ENCODE measurements at regions of chr6 and their contacts with region 1.

Region 1: GRCh38 chr6:154156135-154156896 is 117.3 kb downstream of the OPRM1 start:
- DNase-seq: no peak
- ATAC-seq: no peak
- H3K4me3 ChIP-seq: no peak overlapping the region
- H3K27ac ChIP-seq: no peak overlapping the region
- H3K4me1 ChIP-seq: no peaks in the 10 kb centered on the region
- H3K27me3 ChIP-seq: peaks cover 0 to 2% (median 0%) of the 10 kb centered on the region in 3 donors
- CTCF ChIP-seq: peak; percentile 26

Region 2: DNA sequence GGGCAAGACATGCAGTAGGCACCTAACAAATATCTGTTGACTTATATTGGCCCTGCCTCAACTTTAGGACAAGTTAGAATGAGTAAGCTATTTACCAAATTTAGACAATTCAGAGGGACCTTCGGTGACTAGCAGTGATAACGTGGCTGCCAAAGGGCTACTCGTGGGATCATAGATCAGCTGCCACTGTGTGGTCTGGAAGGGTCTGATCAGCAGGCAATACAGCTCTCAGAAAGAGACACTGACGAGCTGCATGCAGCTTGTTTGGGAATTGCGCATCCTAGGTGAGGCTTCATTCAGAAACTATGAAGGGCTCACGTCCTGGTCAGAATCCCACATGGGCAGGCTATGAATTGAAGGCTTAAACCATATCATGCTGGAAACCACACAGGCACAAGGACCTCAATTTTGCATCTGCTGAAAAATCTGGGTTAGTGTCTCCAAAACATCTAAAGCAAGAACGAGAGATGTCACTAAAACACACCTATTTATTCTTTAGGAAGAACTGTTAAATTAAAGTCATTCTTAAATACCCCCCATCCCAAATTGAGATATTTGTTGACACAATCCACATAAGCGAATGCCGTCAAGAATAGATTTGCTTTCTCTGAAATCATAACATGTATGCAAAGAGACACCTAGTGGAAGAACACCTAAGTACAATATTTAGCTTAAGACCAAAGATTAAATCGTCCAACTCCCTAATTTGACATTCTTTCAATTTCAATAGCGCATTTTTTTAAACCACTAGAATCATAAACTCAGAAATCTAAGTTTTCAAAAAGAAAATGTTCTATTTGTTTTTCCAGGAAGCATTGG is 120.7 kb after region 1 on chr6:
- intact Hi-C with region 1: loop called (anchors 5 kb)
- DNase-seq: no peak
- ATAC-seq: no peak
- H3K4me3 ChIP-seq: no peak overlapping the region
- H3K27ac ChIP-seq: no peak overlapping the region
- H3K4me1 ChIP-seq: no peaks in the 10 kb centered on the region
- H3K27me3 ChIP-seq: no peaks in the 10 kb centered on the region
- CTCF ChIP-seq: peak; percentile 52

Region 3: DNA sequence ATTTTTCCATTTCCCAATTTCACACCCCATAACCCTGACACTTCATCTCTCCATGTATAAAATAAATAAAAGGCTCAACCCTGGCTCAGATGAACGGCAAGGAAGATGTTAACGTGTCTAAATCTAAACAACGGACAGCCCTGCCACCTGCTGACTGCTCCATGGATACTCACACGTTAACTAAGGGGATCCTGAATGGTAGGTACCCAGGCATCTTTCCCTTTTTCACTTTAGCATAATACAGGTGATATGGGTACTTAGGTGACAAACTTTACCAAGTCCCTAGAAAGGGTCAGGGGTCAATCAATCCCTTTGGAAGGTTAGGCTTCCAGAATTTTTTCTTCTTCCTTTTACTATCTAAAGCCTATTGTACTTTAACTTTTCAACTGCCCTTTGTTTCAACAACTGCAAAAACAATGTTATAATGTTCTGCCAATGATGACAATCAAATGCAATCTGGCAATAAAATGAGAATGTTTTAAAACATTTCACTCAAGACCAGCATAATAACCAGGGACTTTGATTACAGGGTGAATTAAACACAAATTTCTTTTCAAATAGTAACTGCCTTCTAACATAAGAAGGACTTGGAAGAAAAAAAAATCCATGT is 252.7 kb after region 1 on chr6:
- intact Hi-C with region 1: loop called (anchors 2 kb)
- DNase-seq: no peak
- ATAC-seq: peak; percentile 56 to 75 (median 67)
- H3K4me3 ChIP-seq: no peak overlapping the region
- H3K27ac ChIP-seq: peak overlapping the region; percentile 83
- H3K4me1 ChIP-seq: peaks cover 33% of the 10 kb centered on the region
- H3K27me3 ChIP-seq: no peaks in the 10 kb centered on the region
- CTCF ChIP-seq: peak; percentile 50

Region 4: GRCh38 chr6:154615483-154616025 is 459.2 kb after region 1 on chr6:
- intact Hi-C with region 1: loop called in 1 of 2 experiments (anchors 10 kb)
- DNase-seq: peak; percentile 28 to 60
- ATAC-seq: peak; percentile 51 to 73 (median 59)
- H3K4me3 ChIP-seq: no peak overlapping the region
- H3K27ac ChIP-seq: no peak overlapping the region
- H3K4me1 ChIP-seq: no peaks in the 10 kb centered on the region
- H3K27me3 ChIP-seq: peaks cover 0 to 5% (median 0%) of the 10 kb centered on the region in 3 donors
- CTCF ChIP-seq: no peak

Region 5: DNA sequence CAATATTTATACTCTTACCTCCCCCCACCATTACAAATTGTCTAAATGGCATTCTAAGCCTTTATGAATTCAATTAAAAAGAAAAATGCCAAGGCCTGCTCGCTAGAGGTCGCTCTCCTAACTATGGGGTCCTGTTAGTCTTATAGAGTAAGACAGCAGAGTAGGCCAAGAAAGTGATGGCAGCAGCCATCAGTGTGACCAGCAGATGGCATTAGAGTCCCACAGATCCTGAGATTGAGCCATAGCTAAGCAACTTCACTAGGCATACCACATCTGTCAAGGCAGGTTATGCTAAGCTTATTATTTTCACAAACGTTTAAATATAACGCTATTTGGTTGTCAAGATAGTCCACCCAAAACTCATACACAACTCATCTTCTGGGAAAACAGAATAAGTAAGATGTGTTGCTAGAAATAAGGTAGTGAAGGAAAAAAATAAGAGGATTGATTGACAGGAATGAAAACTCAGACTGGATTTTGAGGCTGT is 519.3 kb after region 1 on chr6:
- intact Hi-C with region 1: loop called in 1 of 2 experiments (anchors 10 kb)
- DNase-seq: peak; percentile 78 to 84
- ATAC-seq: peak; percentile 98 to 100 (median 100)
- H3K4me3 ChIP-seq: no peak overlapping the region
- H3K27ac ChIP-seq: no peak overlapping the region
- H3K4me1 ChIP-seq: no peaks in the 10 kb centered on the region
- H3K27me3 ChIP-seq: no peaks in the 10 kb centered on the region
- CTCF ChIP-seq: peak; percentile 99